Tibial artery (tissue), 4 donors: ENCODE measurements at regions of chr22 and their contacts with region 1.

Region 1: DNA sequence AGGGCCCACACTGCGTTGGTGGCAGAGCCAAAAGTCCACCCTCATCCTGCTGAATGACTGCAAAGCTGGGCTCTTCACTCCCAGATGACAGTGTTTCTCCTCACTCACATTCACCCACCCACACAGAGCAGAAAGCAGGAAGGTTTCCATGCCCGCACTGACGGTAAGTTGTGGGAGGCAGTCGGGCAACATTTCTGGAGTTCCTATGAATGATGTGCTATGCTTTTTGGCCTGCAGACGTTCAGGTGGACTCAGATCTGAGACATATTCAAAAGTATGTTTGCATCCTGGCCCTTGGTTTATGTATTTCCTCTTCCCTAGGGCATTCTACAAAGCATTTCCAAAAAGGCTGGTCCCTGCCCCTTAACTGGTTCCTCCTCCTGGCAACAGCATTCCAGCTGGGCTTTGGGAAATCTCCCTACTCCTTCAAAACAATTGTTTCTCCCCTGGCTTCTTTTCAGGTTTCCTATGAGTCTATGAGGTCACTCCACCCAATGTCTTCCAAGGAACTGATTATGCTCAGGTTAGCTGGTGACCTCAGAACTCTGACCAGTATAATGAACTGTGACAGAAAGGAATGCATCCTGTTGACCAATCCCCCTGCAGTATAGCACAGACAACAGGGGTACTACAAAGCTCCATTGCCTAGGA is 36.4 kb downstream of the PACSIN2 start:
- DNase-seq: no peak
- H3K4me3 ChIP-seq: no peak overlapping the region
- H3K27ac ChIP-seq: peak overlapping the region; percentile 21 to 40
- H3K4me1 ChIP-seq: peaks cover 0 to 50% (median 37%) of the 10 kb centered on the region in 4 donors
- H3K27me3 ChIP-seq: no peaks in the 10 kb centered on the region
- CTCF ChIP-seq: no peak

Region 2: GRCh38 chr22:43036282-43036829 is 57.8 kb after region 1 on chr22:
- intact Hi-C with region 1: loop called (anchors 10 kb)
- DNase-seq: peak; percentile 62 to 78
- H3K4me3 ChIP-seq: no peak overlapping the region
- H3K27ac ChIP-seq: peak overlapping the region in 1 of 2 donors; percentile 22
- H3K4me1 ChIP-seq: peaks cover 0 to 10% (median 6%) of the 10 kb centered on the region in 4 donors
- H3K27me3 ChIP-seq: no peaks in the 10 kb centered on the region
- CTCF ChIP-seq: no peak